ENCODE measurements at regions of chr17 and their contacts with region 1.

Region 1: GRCh38 chr17:72556944-72557826 is 436.4 kb downstream of the SOX9 start:
- DNase-seq: peak; percentile 38
- H3K4me3 Mint-ChIP-seq: no peak overlapping the region
- H3K27ac Mint-ChIP-seq: no peak overlapping the region
- H3K4me1 Mint-ChIP-seq: no peaks in the 10 kb centered on the region
- H3K27me3 Mint-ChIP-seq: no peaks in the 10 kb centered on the region

Region 2: DNA sequence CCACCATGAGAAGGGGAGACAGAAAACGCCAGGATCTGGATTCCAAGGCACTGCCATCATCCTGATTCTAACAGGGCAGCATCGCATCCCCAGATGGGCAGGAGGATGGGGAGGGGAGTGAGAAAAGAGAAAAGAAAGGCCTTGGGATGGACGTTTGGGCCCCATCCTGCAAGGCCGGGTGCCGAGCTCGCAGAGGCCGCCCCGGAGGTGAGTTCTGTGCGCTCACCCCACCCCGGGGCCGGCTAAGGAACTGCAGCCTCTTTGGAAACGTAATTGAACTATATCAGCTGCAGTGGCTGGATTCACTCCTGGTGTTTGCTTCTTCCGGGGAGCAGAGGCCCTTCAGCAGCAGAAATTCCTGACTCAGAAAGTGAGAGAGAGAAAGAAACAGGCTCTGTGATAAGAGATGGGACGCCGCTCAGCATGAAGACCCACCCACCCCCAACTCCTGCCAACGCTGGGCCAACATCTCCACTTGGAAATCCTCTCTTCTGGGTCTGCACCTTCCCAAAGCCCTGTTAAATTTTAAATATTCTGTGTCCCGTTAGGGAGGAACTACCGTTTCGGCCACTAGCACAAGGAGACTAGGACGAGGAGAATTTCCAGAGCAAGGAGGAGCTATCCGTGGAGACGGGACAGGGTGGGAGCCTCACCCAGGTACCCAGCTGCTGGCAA is 599.1 kb after region 1 on chr17:
- intact Hi-C with region 1: loop called (anchors 1 kb)
- DNase-seq: peak; percentile 35
- H3K4me3 Mint-ChIP-seq: no peak overlapping the region
- H3K27ac Mint-ChIP-seq: no peak overlapping the region
- H3K4me1 Mint-ChIP-seq: no peaks in the 10 kb centered on the region
- H3K27me3 Mint-ChIP-seq: peaks cover 23% of the 10 kb centered on the region

Region 3: GRCh38 chr17:73255671-73256181 is 698.5 kb after region 1 on chr17:
- intact Hi-C with region 1: loop called (anchors 10 kb)
- DNase-seq: peak; percentile 22
- H3K4me3 Mint-ChIP-seq: no peak overlapping the region
- H3K27ac Mint-ChIP-seq: no peak overlapping the region
- H3K4me1 Mint-ChIP-seq: no peaks in the 10 kb centered on the region
- H3K27me3 Mint-ChIP-seq: no peaks in the 10 kb centered on the region

Region 4: DNA sequence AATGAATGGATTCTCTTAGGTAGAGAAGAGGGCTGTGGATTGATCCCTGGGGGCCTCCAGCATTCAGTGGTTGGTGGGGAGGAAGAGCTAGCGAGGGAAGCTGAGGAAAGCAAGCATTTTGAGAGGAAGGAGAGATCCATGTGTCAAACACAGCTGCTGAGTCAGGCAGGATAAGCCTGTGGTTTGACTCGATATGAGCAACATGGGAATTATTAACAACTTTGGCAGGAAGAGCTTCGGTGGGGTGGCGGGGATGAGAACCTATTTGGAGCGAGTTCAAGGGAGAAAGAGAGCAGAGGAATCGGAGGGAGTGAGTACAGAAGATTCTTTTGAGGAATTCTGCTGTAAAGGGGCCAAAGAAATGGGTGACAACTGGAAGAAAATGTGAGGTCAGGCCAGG is 814.1 kb after region 1 on chr17:
- intact Hi-C with region 1: loop called (anchors 1 kb)
- DNase-seq: no peak
- H3K4me3 Mint-ChIP-seq: no peak overlapping the region
- H3K27ac Mint-ChIP-seq: no peak overlapping the region
- H3K4me1 Mint-ChIP-seq: no peaks in the 10 kb centered on the region
- H3K27me3 Mint-ChIP-seq: peaks cover 10% of the 10 kb centered on the region